IMR-90 (cell line): ENCODE measurements at regions of chr12 and their contacts with region 1.

Region 1: GRCh38 chr12:66087365-66087943 is 43.1 kb downstream of the LLPH start:
- DNase-seq: peak; percentile 88
- ATAC-seq: peak; percentile 93
- H3K4me3 ChIP-seq: no peak overlapping the region
- H3K27ac ChIP-seq: no peak overlapping the region
- H3K4me1 ChIP-seq: peaks cover 4% of the 10 kb centered on the region
- H3K27me3 ChIP-seq: no peaks in the 10 kb centered on the region
- CTCF ChIP-seq: peak; percentile 89
- POLR2A ChIP-seq: peak; percentile 30; the same call in 1 of the 2 replicates
- RAD21 ChIP-seq: peak; percentile 91

Region 2: DNA sequence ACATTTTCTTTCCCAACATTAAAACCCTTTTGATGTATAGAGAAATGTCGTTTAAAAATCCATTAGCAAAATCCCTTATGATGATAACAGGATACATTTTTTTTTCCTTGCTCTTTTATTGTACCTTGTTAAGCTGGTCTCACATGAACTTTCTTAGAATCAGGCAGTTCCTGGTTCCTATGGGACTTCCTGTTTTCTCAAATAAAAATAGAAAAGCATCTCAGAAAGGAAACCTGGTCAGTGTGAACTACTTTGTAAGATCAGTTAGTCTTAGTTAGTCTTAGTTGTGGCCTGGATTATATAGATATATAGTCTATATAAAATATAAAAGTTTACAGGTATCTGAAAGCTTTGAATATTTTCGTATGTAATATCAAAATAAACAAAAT is 877.8 kb before region 1 on chr12:
- CTCF ChIA-PET with region 1: no interaction called
- POLR2A ChIA-PET with region 1: no interaction called
- dilution Hi-C with region 1: no loop called
- in situ Hi-C with region 1: no loop called
- intact Hi-C with region 1: no loop called
- DNase-seq: no peak
- ATAC-seq: no peak
- H3K4me3 ChIP-seq: no peak overlapping the region
- H3K27ac ChIP-seq: no peak overlapping the region
- H3K4me1 ChIP-seq: no peaks in the 10 kb centered on the region; the same call in 1 of the 2 replicates
- H3K27me3 ChIP-seq: no peaks in the 10 kb centered on the region
- CTCF ChIP-seq: no peak
- POLR2A ChIP-seq: no peak
- RAD21 ChIP-seq: no peak

Region 3: DNA sequence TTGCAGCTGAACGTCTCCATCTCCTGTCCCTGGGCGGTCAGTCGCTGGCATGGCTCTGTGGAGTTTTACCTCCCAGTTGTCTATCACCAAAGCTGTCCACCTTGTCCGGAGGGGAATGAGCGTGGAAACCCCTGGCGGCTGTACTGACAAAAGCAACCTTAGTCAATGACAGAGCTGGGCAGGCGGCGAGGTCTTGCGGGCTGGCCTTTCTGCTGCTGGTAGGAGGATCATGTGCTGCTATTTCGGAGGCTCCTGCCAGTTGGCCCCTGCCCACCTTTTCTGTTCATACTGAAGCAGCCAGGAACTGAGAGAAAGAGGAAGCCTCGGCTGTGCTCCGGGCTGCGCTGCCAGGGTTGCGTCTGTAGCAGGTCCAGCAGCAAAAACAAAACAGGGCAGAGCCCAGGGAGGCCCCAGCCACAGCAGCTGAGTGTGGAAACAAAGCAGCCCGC is 205.5 kb before region 1 on chr12:
- CTCF ChIA-PET with region 1: no interaction called
- POLR2A ChIA-PET with region 1: no interaction called
- dilution Hi-C with region 1: no loop called
- in situ Hi-C with region 1: no loop called
- intact Hi-C with region 1: loop called (anchors 1 kb)
- DNase-seq: peak; percentile 38
- ATAC-seq: no peak
- H3K4me3 ChIP-seq: no peak overlapping the region
- H3K27ac ChIP-seq: peak overlapping the region; percentile 70; the same call in 1 of the 2 replicates
- H3K4me1 ChIP-seq: peaks cover 29% of the 10 kb centered on the region
- H3K27me3 ChIP-seq: no peaks in the 10 kb centered on the region
- CTCF ChIP-seq: 0 out of 2 replicates have a peak, but pooled peaks have one; percentile 1
- POLR2A ChIP-seq: no peak
- RAD21 ChIP-seq: no peak

Region 4: GRCh38 chr12:66025477-66025876 is 62.0 kb before region 1 on chr12:
- CTCF ChIA-PET with region 1: no interaction called
- POLR2A ChIA-PET with region 1: no interaction called
- dilution Hi-C with region 1: no loop called
- in situ Hi-C with region 1: no loop called
- intact Hi-C with region 1: loop called (anchors 2 kb)
- DNase-seq: no peak
- ATAC-seq: no peak
- H3K4me3 ChIP-seq: no peak overlapping the region
- H3K27ac ChIP-seq: no peak overlapping the region
- H3K4me1 ChIP-seq: no peaks in the 10 kb centered on the region
- H3K27me3 ChIP-seq: peaks cover 2% of the 10 kb centered on the region; the same call in 1 of the 2 replicates
- CTCF ChIP-seq: no peak
- POLR2A ChIP-seq: no peak
- RAD21 ChIP-seq: no peak